ENCODE measurements at regions of chr4 and their contacts with region 1.

Region 1: DNA sequence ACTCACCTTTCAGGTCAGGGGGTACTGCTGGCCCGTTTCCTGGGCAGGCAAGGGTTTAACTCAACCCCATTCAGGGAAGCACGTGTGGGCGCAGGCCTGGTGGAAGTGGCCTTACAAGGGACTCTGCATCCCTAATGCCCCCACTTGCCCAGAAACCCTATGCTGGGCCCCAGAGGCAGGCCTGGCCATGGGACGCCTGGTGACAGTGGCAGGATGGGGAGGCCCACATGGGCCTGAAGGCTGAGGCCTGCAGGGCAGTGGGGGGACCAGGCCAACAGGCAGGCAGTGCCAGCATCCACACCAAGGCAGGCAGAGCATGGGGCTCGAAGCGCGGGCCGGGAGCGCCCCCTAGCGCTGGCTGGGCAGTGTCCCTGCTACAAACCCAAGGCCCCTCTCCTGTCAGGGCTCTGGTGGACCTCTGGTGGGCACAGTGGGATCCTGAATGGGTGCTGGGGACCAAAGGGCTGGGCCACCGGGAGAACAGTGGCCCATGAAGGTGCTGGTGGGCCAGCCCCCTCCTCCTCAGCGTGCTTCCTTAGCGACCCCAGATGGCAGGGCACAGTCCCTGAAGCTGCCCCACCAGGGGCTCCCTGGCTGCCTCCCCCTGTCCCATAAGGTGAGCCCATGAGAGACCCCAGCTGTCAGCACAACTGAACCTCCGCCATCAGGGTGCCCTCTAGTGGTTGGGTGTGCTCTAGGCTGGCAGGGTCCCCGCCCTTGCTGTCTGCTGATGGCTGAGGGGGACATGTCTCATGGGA is 16.8 kb downstream of the FGFR3 start:
- DNase-seq: peak; percentile 46
- ATAC-seq: peak; percentile 95
- H3K4me3 ChIP-seq: no peak overlapping the region
- H3K27ac ChIP-seq: no peak overlapping the region
- H3K4me1 ChIP-seq: no peaks in the 10 kb centered on the region
- H3K27me3 ChIP-seq: no peaks in the 10 kb centered on the region
- CTCF ChIP-seq: peak; percentile 93
- POLR2A ChIP-seq: peak; percentile 59
- RAD21 ChIP-seq: peak; percentile 96

Region 2: GRCh38 chr4:1740021-1740545 is 69.8 kb before region 1 on chr4:
- CTCF ChIA-PET with region 1: interaction called, 4 read pairs
- POLR2A ChIA-PET with region 1: no interaction called
- dilution Hi-C with region 1: no loop called
- in situ Hi-C with region 1: loop called (anchors 5 kb)
- intact Hi-C with region 1: no loop called
- DNase-seq: no peak
- ATAC-seq: no peak
- H3K4me3 ChIP-seq: no peak overlapping the region
- H3K27ac ChIP-seq: no peak overlapping the region
- H3K4me1 ChIP-seq: no peaks in the 10 kb centered on the region
- H3K27me3 ChIP-seq: no peaks in the 10 kb centered on the region
- CTCF ChIP-seq: no peak
- POLR2A ChIP-seq: no peak
- RAD21 ChIP-seq: no peak

Region 3: DNA sequence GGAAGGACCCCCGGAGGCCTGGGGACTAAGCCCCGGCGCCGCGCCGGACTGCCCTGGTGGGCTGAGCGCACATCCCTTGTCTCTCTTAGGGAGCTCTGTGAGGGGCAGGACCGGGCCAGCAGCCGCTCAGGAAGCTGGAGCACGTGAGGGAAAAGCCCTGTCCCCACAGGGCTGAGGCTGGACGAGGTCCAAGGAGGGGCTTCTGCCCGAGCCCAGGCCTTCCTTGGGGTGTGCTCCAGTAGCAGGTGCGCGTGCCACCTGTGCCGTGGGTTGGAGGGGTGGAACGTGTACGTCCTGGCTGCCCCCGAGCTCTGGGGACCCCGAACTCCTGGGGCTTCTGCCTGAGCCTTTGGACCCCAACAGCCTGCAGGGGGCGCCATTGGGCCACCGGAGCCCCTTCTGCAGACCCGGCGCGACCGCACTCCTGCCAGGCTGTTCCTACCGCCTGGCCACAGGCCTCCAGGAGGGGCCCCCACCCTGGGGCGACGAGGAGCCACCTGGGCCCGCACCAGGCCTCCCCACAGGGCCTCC is 61.4 kb before region 1 on chr4:
- CTCF ChIA-PET with region 1: interaction called, 8 read pairs
- POLR2A ChIA-PET with region 1: no interaction called
- dilution Hi-C with region 1: no loop called
- in situ Hi-C with region 1: loop called (anchors 5 kb)
- intact Hi-C with region 1: loop called (anchors 1 kb)
- DNase-seq: peak; percentile 41
- ATAC-seq: peak; percentile 81
- H3K4me3 ChIP-seq: no peak overlapping the region
- H3K27ac ChIP-seq: no peak overlapping the region
- H3K4me1 ChIP-seq: no peaks in the 10 kb centered on the region
- H3K27me3 ChIP-seq: no peaks in the 10 kb centered on the region; the same call in 1 of the 2 replicates
- CTCF ChIP-seq: peak; percentile 77
- POLR2A ChIP-seq: no peak
- RAD21 ChIP-seq: peak; percentile 80

Region 4: GRCh38 chr4:1910643-1911042 is 100.7 kb after region 1 on chr4:
- CTCF ChIA-PET with region 1: interaction called, 3 read pairs
- POLR2A ChIA-PET with region 1: no interaction called
- dilution Hi-C with region 1: no loop called
- in situ Hi-C with region 1: no loop called
- intact Hi-C with region 1: loop called (anchors 5 kb)
- DNase-seq: peak; percentile 66
- ATAC-seq: peak; percentile 94
- H3K4me3 ChIP-seq: no peak overlapping the region
- H3K27ac ChIP-seq: no peak overlapping the region
- H3K4me1 ChIP-seq: no peaks in the 10 kb centered on the region
- H3K27me3 ChIP-seq: no peaks in the 10 kb centered on the region
- CTCF ChIP-seq: peak; percentile 79
- POLR2A ChIP-seq: no peak
- RAD21 ChIP-seq: peak; percentile 80

Region 5: GRCh38 chr4:2194496-2194895 is 384.6 kb after region 1 on chr4:
- CTCF ChIA-PET with region 1: no interaction called
- POLR2A ChIA-PET with region 1: no interaction called
- dilution Hi-C with region 1: no loop called
- in situ Hi-C with region 1: no loop called
- intact Hi-C with region 1: no loop called
- DNase-seq: peak; percentile 10
- ATAC-seq: no peak
- H3K4me3 ChIP-seq: no peak overlapping the region
- H3K27ac ChIP-seq: no peak overlapping the region
- H3K4me1 ChIP-seq: no peaks in the 10 kb centered on the region
- H3K27me3 ChIP-seq: no peaks in the 10 kb centered on the region
- CTCF ChIP-seq: no peak
- POLR2A ChIP-seq: no peak
- RAD21 ChIP-seq: no peak